H1 (cell line): ENCODE measurements at regions of chr3 and their contacts with region 1.

Region 1: GRCh38 chr3:45043728-45044299 is 17.7 kb downstream of the CLEC3B start:
- DNase-seq: no peak
- H3K4me3 ChIP-seq: no peak overlapping the region
- H3K27ac ChIP-seq: no peak overlapping the region
- H3K4me1 ChIP-seq: no peaks in the 10 kb centered on the region
- H3K27me3 ChIP-seq: no peaks in the 10 kb centered on the region; a peak in 3 of 7 replicates
- CTCF ChIP-seq: no peak
- EP300 ChIP-seq: no peak
- POLR2A ChIP-seq: no peak
- RAD21 ChIP-seq: no peak

Region 2: DNA sequence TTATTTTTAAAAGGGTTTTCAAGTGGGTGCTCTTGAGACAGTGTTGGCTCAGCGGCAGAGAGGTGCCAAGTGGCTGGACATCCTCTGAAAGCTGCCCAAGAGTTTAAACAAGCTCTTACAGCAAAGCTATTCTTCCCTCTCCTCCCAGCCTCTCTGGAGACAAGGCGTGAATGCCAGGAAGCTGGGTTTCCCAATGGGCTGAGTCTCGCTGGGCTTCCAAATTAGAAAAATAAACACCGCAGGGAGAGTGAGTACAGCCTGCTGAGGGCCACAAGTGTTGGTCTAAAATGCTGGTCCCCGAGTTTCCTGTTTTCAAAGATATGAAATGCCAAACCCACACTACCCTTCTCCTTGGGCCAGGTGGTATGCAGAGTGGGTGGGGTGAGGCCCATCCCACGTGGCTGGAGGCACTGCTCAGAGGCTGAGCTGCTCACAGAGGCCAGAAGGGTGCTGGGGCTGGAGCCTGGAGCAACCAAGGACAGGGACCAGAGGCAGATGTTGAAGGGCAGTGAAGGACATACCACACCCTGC is 104.2 kb before region 1 on chr3:
- CTCF ChIA-PET with region 1: no interaction called
- POLR2A ChIA-PET with region 1: no interaction called
- DNase-seq: no peak
- H3K4me3 ChIP-seq: no peak overlapping the region
- H3K27ac ChIP-seq: no peak overlapping the region
- H3K4me1 ChIP-seq: no peaks in the 10 kb centered on the region
- H3K27me3 ChIP-seq: no peaks in the 10 kb centered on the region
- CTCF ChIP-seq: no peak
- EP300 ChIP-seq: no peak
- POLR2A ChIP-seq: no peak
- RAD21 ChIP-seq: no peak

Region 3: GRCh38 chr3:45020534-45020933 is 23.3 kb before region 1 on chr3:
- CTCF ChIA-PET with region 1: no interaction called
- POLR2A ChIA-PET with region 1: no interaction called
- DNase-seq: no peak
- H3K4me3 ChIP-seq: no peak overlapping the region
- H3K27ac ChIP-seq: no peak overlapping the region
- H3K4me1 ChIP-seq: peaks cover 0 to 5% (median 0%) of the 10 kb centered on the region in 4 experiments; a peak in 4 of 7 replicates
- H3K27me3 ChIP-seq: no peaks in the 10 kb centered on the region
- CTCF ChIP-seq: no peak
- EP300 ChIP-seq: no peak
- POLR2A ChIP-seq: no peak
- RAD21 ChIP-seq: no peak

Region 4: GRCh38 chr3:45066109-45066801 is 22.4 kb after region 1 on chr3:
- CTCF ChIA-PET with region 1: interaction called, 13 read pairs
- POLR2A ChIA-PET with region 1: no interaction called
- DNase-seq: no peak
- H3K4me3 ChIP-seq: no peak overlapping the region
- H3K27ac ChIP-seq: no peak overlapping the region
- H3K4me1 ChIP-seq: no peaks in the 10 kb centered on the region
- H3K27me3 ChIP-seq: no peaks in the 10 kb centered on the region
- CTCF ChIP-seq: no peak
- EP300 ChIP-seq: no peak
- POLR2A ChIP-seq: no peak
- RAD21 ChIP-seq: no peak

Region 5: GRCh38 chr3:45095916-45096526 is 52.2 kb after region 1 on chr3:
- CTCF ChIA-PET with region 1: interaction called, 14 read pairs
- POLR2A ChIA-PET with region 1: interaction called, 4 read pairs
- DNase-seq: no peak
- H3K4me3 ChIP-seq: no peak overlapping the region
- H3K27ac ChIP-seq: no peak overlapping the region
- H3K4me1 ChIP-seq: no peaks in the 10 kb centered on the region
- H3K27me3 ChIP-seq: no peaks in the 10 kb centered on the region; a peak in 1 of 7 replicates
- CTCF ChIP-seq: no peak
- EP300 ChIP-seq: no peak
- POLR2A ChIP-seq: no peak
- RAD21 ChIP-seq: no peak

Region 6: GRCh38 chr3:45170096-45170495 is 126.3 kb after region 1 on chr3:
- CTCF ChIA-PET with region 1: interaction called, 11 read pairs
- POLR2A ChIA-PET with region 1: no interaction called
- DNase-seq: no peak
- H3K4me3 ChIP-seq: no peak overlapping the region
- H3K27ac ChIP-seq: no peak overlapping the region
- H3K4me1 ChIP-seq: peaks cover 1 to 9% (median 5%) of the 10 kb centered on the region in 4 experiments; a peak in 6 of 7 replicates
- H3K27me3 ChIP-seq: peaks cover 0 to 6% (median 0%) of the 10 kb centered on the region in 4 experiments; a peak in 2 of 7 replicates
- CTCF ChIP-seq: no peak
- EP300 ChIP-seq: no peak
- POLR2A ChIP-seq: no peak
- RAD21 ChIP-seq: no peak

Region 7: DNA sequence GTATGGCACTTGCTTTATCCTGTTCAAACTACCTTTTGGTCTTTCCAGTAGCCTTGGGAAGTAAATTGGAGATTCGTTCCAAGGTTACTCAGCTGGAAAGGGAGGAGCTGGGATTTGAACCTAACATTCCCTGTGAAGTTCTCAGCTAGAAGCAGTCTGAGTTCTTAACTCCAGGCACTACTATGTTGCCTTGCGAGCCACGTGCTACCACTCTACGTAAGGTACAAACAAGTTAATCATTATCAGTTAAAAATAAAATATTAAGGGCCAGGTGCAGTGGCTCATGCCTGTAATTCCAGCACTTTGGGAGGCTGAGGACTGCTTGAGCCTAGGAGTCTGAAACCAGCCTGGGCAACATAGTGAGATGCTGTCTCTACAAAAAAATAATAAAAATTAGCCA is 133.1 kb after region 1 on chr3:
- CTCF ChIA-PET with region 1: interaction called, 10 read pairs
- POLR2A ChIA-PET with region 1: no interaction called
- DNase-seq: no peak
- H3K4me3 ChIP-seq: no peak overlapping the region
- H3K27ac ChIP-seq: no peak overlapping the region
- H3K4me1 ChIP-seq: no peaks in the 10 kb centered on the region
- H3K27me3 ChIP-seq: no peaks in the 10 kb centered on the region
- CTCF ChIP-seq: no peak
- EP300 ChIP-seq: no peak
- POLR2A ChIP-seq: no peak
- RAD21 ChIP-seq: no peak

Region 8: DNA sequence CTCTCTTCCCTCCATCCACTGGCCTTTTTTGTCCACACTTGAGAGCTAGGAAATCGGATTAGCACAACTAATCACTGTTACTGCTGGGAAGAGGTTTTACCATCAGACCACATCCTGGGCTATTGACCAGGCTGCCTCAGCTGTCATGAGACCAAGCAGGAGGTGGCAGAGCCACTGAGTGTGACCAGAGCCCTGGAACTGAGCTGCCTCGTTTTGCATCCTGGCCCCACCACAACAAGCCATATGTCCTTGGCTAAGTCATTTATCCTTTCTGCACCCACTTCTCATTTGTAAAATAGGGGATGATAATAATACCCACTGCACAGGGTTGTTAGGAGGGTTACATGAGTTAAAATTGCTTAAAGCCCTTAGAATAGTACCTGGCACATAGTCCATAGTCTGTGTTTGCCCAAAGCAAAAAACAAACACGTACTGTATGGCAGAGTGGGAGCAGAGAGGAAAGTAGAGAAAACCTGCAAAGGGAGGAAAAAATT is 148.2 kb after region 1 on chr3:
- CTCF ChIA-PET with region 1: interaction called, 15 read pairs
- POLR2A ChIA-PET with region 1: no interaction called
- DNase-seq: no peak
- H3K4me3 ChIP-seq: no peak overlapping the region
- H3K27ac ChIP-seq: no peak overlapping the region
- H3K4me1 ChIP-seq: no peaks in the 10 kb centered on the region
- H3K27me3 ChIP-seq: no peaks in the 10 kb centered on the region; a peak in 1 of 7 replicates
- CTCF ChIP-seq: no peak
- EP300 ChIP-seq: no peak
- POLR2A ChIP-seq: no peak
- RAD21 ChIP-seq: no peak